ENCODE measurements at regions of chr7 and their contacts with region 1.

Region 1: GRCh38 chr7:17234398-17235031 is 63.9 kb upstream of the AHR start:
- DNase-seq: peak; percentile 84
- H3K4me3 Mint-ChIP-seq: peak overlapping the region; percentile 69
- H3K27ac Mint-ChIP-seq: peak overlapping the region; percentile 89
- H3K4me1 Mint-ChIP-seq: peaks cover 46% of the 10 kb centered on the region
- H3K27me3 Mint-ChIP-seq: no peaks in the 10 kb centered on the region

Region 2: DNA sequence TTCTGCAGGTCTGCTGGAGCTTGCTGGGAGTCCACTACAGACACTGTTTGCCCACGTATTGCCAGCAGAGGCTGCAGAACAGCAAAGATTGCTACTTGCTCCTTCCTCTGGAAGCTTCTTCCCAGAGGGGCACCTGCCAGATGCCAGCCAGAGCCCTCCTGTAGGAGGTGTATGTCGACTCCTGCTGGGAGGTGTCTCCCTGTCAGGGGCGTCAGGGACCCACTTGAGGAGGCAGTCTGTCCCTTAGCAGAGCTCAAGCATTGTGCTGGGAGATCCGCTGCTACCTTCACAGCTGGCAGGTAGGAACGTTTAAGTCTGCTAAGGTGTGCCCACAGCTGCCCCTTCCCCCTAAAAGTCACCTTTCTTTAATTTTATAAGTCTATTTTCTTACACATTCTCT is 1069.7 kb before region 1 on chr7:
- CTCF ChIA-PET with region 1: no interaction called
- intact Hi-C with region 1: no loop called
- DNase-seq: no peak
- H3K4me3 Mint-ChIP-seq: no peak overlapping the region
- H3K27ac Mint-ChIP-seq: no peak overlapping the region
- H3K4me1 Mint-ChIP-seq: no peaks in the 10 kb centered on the region
- H3K27me3 Mint-ChIP-seq: no peaks in the 10 kb centered on the region

Region 3: DNA sequence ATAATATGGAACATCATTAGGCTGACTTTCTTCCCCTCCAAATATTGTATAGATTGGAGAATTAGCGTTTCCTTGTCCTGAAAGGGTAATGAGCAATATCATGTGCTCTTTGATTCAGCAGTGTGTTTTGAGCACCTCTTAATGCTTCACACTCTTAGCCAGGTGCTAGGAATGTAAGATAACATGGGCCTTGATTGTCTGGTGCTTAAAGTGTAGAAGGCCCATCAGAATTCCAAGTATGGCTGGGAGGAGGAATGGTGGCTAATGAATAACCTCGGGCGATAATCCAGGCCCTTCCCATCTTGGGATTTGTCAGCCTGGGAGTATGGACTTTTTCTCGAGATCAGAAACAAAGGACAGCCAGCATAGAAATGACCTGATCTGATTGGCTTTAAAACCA is 472.3 kb before region 1 on chr7:
- CTCF ChIA-PET with region 1: no interaction called
- intact Hi-C with region 1: no loop called
- DNase-seq: no peak
- H3K4me3 Mint-ChIP-seq: no peak overlapping the region
- H3K27ac Mint-ChIP-seq: no peak overlapping the region
- H3K4me1 Mint-ChIP-seq: no peaks in the 10 kb centered on the region
- H3K27me3 Mint-ChIP-seq: peaks cover 3% of the 10 kb centered on the region

Region 4: DNA sequence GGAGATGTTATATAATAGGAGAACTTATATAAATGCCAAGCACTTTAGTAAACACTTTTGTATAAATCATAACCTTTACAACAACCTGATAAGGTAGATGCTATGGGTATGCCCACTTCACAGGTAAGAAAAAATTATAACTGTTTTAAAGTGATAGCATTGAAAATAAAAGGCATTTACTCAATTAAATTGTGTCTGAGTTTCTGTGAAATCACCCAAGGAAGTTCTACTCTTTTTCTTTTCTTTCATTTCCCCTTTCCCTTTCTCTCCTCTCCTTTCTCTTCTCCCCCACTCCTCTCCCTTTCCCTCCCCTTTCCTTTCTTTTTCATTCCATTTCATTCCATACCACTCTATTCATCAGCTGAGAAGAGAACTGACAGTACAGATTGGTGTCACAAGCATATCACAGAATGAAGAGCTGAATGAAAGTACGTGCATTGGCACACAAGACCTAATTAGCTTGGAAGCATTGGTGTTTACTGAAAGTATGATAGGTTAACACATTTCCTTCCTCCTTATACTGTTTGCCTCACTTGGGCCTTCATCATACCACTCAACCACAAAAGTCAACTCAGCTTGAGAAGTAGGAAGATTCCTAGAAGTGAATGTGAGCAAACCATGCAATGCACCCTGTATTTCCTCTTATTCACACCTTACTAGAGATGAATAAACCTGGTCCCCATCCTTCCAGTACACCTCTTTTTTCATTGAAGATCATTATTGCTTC is 234.8 kb before region 1 on chr7:
- CTCF ChIA-PET with region 1: no interaction called
- intact Hi-C with region 1: loop called (anchors 1 kb)
- DNase-seq: peak; percentile 18
- H3K4me3 Mint-ChIP-seq: no peak overlapping the region
- H3K27ac Mint-ChIP-seq: no peak overlapping the region
- H3K4me1 Mint-ChIP-seq: peaks cover 7% of the 10 kb centered on the region
- H3K27me3 Mint-ChIP-seq: peaks cover 2% of the 10 kb centered on the region

Region 5: DNA sequence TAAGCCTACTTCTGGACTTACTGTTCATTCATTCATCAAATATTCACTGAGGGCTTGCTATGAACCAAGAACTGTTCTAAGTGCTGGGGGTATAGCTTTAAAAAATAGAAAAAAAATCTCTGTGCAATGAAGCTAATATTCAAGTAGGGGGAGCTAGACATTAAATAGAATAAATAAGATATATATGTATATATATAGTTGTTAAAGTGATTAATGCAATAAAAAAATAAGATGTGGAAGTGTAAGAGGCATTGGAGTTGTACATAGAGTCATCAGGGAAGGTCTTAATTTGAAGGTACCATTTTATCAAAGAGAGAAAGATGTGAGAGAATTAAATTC is 171.5 kb before region 1 on chr7:
- CTCF ChIA-PET with region 1: no interaction called
- intact Hi-C with region 1: no loop called
- DNase-seq: no peak
- H3K4me3 Mint-ChIP-seq: no peak overlapping the region
- H3K27ac Mint-ChIP-seq: no peak overlapping the region
- H3K4me1 Mint-ChIP-seq: peaks cover 2% of the 10 kb centered on the region
- H3K27me3 Mint-ChIP-seq: no peaks in the 10 kb centered on the region

Region 6: DNA sequence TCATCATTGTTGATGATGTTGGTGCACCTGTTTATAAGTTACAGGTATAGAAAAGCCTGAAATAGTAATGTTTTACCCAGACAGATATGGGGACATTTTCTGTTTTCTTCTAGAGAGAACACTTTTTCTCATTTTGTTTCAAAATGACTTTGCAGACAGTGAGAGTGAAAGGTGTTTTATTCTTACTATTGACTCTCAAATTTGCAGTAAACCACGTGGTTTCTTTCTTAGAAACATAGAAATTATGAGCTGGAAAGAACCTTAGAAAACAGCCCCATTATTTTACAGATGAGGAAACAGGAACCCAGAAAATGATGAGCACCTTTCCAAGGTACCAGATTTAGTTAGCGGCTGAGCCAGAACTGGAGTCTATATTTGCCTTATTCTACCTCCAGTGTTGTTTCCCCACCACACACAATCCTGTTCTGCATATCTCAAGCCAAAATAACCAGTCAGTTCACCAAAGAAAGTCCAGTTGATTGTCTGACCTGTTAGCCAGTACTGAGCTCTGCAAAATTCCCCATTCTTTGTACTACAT is 74.9 kb before region 1 on chr7:
- CTCF ChIA-PET with region 1: no interaction called
- intact Hi-C with region 1: loop called (anchors 1 kb)
- DNase-seq: peak; percentile 45
- H3K4me3 Mint-ChIP-seq: no peak overlapping the region
- H3K27ac Mint-ChIP-seq: peak overlapping the region; percentile 76
- H3K4me1 Mint-ChIP-seq: peaks cover 21% of the 10 kb centered on the region
- H3K27me3 Mint-ChIP-seq: peaks cover 2% of the 10 kb centered on the region

Region 7: GRCh38 chr7:17255926-17256325 is 21.4 kb after region 1 on chr7:
- CTCF ChIA-PET with region 1: no interaction called
- intact Hi-C with region 1: loop called (anchors 1 kb)
- DNase-seq: no peak
- H3K4me3 Mint-ChIP-seq: no peak overlapping the region
- H3K27ac Mint-ChIP-seq: no peak overlapping the region
- H3K4me1 Mint-ChIP-seq: peaks cover 6% of the 10 kb centered on the region
- H3K27me3 Mint-ChIP-seq: no peaks in the 10 kb centered on the region

Region 8: GRCh38 chr7:17304926-17305325 is 70.4 kb after region 1 on chr7:
- CTCF ChIA-PET with region 1: interaction called, 3 read pairs
- intact Hi-C with region 1: loop called (anchors 1 kb)
- DNase-seq: peak; percentile 41
- H3K4me3 Mint-ChIP-seq: peak overlapping the region; percentile 34
- H3K27ac Mint-ChIP-seq: peak overlapping the region; percentile 79
- H3K4me1 Mint-ChIP-seq: peaks cover 32% of the 10 kb centered on the region
- H3K27me3 Mint-ChIP-seq: no peaks in the 10 kb centered on the region

Region 9: DNA sequence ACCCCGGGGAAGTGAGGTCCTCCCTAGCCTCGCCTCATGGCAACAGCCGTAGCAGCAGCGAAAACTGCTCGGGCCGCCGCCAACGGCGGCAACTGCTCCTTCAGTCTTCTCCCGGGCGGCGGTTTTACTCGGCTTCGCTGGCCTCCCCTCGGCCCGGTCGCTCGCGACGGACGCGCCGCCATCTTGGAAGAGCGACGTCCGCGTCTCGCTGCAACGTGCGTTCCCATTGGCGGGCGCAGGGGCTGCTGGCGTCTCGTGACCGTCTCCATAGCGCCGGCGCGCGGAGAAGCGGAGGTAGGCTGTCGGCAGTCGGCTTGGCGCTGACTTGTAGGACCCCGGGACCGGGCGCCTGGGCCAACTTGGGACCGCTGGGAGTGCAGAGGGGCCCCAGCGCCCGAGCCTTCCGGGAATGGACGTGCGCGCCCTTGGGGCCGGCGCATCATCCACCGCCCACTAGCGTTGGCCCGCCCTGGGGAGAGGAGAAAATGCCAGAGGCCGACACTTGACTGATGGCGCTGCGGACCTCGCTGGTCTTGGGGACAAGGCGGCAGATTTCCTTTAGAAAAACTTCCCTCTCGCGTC is 705.9 kb after region 1 on chr7 and contains the start of gene SNX13:
- CTCF ChIA-PET with region 1: no interaction called
- intact Hi-C with region 1: loop called (anchors 5 kb)
- DNase-seq: peak; percentile 91
- H3K4me3 Mint-ChIP-seq: peak within 1 kb of the TSS; percentile 99
- H3K27ac Mint-ChIP-seq: peak within 1 kb of the TSS; percentile 92
- H3K4me1 Mint-ChIP-seq: peaks cover 41% of the 10 kb centered on the region
- H3K27me3 Mint-ChIP-seq: no peaks in the 10 kb centered on the region
- total RNA-seq, gene SNX13: 19.5 to 20.3 TPM

Region 10: DNA sequence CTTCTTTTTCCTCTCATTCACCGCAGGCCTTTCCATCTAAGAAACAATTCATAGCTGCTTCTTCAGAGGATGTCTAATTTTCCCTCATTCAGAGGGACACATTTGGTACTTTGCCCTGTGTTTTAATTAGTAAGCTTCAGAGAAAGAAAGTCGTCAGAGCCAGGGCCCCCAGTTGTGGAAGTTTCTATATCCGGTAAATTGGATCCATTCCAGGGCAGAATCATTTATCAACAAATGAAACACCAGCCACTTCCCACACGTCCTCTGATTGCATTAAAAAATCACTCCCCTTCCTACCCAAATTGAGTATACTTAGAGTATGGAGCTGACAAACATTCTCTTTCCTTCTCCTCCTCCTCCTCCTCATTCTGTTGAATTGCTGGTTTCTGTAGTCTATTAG is 1055.3 kb after region 1 on chr7:
- CTCF ChIA-PET with region 1: no interaction called
- intact Hi-C with region 1: no loop called
- DNase-seq: no peak
- H3K4me3 Mint-ChIP-seq: no peak overlapping the region
- H3K27ac Mint-ChIP-seq: no peak overlapping the region
- H3K4me1 Mint-ChIP-seq: no peaks in the 10 kb centered on the region
- H3K27me3 Mint-ChIP-seq: peaks cover 28% of the 10 kb centered on the region